ENCODE measurements at regions of chr15 and their contacts with region 1.

Region 1: DNA sequence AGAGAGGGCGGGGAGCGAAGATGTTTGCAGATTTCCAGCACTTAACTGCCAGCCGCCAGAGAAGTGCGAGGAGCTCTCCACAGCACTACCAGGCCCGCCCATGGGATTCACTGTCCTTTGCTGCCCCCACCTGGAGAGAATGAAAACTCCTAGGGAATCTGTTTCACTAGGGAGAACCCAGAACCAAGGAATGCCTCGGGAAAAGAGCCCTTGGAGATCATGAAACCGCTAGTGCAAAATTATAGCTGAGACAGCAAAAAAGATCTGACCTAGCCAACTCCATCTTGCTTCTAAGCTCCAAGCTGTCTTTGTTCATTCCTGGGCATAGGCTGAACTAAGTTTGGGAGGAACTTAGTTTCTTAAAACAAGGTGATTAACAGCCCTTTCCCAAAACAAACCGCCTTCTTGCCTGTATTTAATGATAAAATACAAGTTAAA is 82.6 kb upstream of the GCNT3 start:
- DNase-seq: peak; percentile 51
- H3K4me3 Mint-ChIP-seq: no peak overlapping the region
- H3K27ac Mint-ChIP-seq: no peak overlapping the region
- H3K4me1 Mint-ChIP-seq: peaks cover 12% of the 10 kb centered on the region
- H3K27me3 Mint-ChIP-seq: peaks cover 17% of the 10 kb centered on the region

Region 2: DNA sequence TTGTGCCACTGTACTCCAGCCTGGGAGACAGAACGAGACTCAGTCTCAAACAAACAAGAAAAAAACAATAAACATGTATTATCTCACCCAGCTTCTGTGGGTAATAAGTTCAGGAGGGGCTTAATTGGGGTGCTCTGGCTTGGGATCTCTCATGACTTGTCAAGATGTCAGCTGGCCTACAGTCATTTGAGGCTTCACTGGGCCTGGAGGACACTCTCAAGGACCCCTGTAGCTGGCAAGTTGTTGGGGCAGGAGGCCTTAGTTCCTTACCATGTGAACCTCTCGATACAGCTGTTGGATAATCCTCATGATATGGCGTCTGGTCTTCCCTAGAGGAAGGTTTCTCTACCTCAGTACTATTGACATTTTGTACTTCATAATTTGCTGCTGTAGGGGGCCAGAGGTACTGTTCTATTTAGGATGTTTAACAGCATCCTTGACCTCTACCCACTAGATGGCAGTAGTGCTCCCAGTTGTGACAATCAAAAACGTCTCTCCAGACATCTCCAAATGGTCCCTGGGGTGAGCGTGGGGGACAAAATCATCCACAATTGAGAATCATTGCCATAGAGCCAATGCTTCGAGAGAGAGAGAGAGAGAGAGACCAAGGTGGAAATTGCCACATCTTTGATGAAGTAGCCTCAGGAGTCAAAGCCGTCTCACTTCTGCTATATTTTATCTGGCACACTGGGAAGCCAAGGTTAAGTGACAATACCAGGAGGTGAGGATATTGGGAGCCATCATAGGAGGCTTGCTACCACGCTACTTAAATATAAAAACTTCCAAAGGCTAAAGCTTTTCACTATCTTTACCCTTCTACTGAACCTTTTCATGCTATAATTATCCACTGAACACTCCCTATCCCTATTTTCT is 571.6 kb before region 1 on chr15:
- intact Hi-C with region 1: loop called (anchors 1 kb)
- DNase-seq: peak; percentile 50
- H3K4me3 Mint-ChIP-seq: no peak overlapping the region
- H3K27ac Mint-ChIP-seq: no peak overlapping the region
- H3K4me1 Mint-ChIP-seq: peaks cover 12% of the 10 kb centered on the region
- H3K27me3 Mint-ChIP-seq: peaks cover 6% of the 10 kb centered on the region

Region 3: GRCh38 chr15:59074607-59075006 is 454.4 kb before region 1 on chr15:
- intact Hi-C with region 1: no loop called
- DNase-seq: no peak
- H3K4me3 Mint-ChIP-seq: no peak overlapping the region
- H3K27ac Mint-ChIP-seq: peak overlapping the region; percentile 81
- H3K4me1 Mint-ChIP-seq: peaks cover 17% of the 10 kb centered on the region
- H3K27me3 Mint-ChIP-seq: no peaks in the 10 kb centered on the region

Region 4: GRCh38 chr15:59622289-59622688 is 93.3 kb after region 1 on chr15:
- intact Hi-C with region 1: loop called (anchors 1 kb)
- DNase-seq: peak; percentile 27
- H3K4me3 Mint-ChIP-seq: no peak overlapping the region
- H3K27ac Mint-ChIP-seq: no peak overlapping the region
- H3K4me1 Mint-ChIP-seq: no peaks in the 10 kb centered on the region
- H3K27me3 Mint-ChIP-seq: peaks cover 15% of the 10 kb centered on the region

Region 5: GRCh38 chr15:59642351-59642750 is 113.4 kb after region 1 on chr15:
- intact Hi-C with region 1: loop called (anchors 5 kb)
- DNase-seq: no peak
- H3K4me3 Mint-ChIP-seq: no peak overlapping the region
- H3K27ac Mint-ChIP-seq: no peak overlapping the region
- H3K4me1 Mint-ChIP-seq: peaks cover 2% of the 10 kb centered on the region
- H3K27me3 Mint-ChIP-seq: no peaks in the 10 kb centered on the region

Region 6: DNA sequence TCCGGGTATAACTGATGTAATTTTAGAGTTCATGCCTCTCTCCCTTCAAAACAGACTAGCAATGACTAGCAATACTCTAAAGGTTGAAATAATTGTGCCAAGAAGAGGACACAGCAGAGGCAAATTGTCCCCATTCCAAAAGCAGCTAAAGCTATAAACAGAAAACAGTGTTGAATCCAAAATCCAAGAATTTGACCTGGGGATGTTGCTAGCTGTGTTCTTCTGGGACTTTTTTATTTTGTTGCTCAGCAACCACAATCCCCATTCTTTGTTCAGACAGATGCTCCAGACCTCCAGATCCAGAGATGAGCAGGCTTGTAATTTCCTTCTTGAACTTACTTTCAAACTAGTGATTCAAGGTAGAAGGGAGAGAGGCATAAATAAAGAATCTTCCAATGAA is 666.6 kb after region 1 on chr15:
- intact Hi-C with region 1: no loop called
- DNase-seq: no peak
- H3K4me3 Mint-ChIP-seq: no peak overlapping the region
- H3K27ac Mint-ChIP-seq: no peak overlapping the region
- H3K4me1 Mint-ChIP-seq: no peaks in the 10 kb centered on the region
- H3K27me3 Mint-ChIP-seq: peaks cover 62% of the 10 kb centered on the region

Measured in activated T-helper 2 cell treated with anti-CD3 and anti-CD28 coated beads, Interferon-gamma antibody, Interleukin-2, Interleukin-4, amounts not matched to agents 10 μg/mL and 5 μg/mL and 100 μg/mL, durations not matched to agents 14 hours and 24 hours and 36 hours (primary cell).